ENCODE measurements at regions of chr3 and their contacts with region 1.

Region 1: GRCh38 chr3:115217678-115218451 is 70.8 kb upstream of the ZBTB20 start:
- H3K4me3 ChIP-seq: no peak overlapping the region
- H3K27ac ChIP-seq: no peak overlapping the region
- H3K4me1 ChIP-seq: no peaks in the 10 kb centered on the region
- CTCF ChIP-seq: no peak

Region 2: GRCh38 chr3:115692887-115693524 is 475.1 kb after region 1 on chr3:
- CTCF ChIA-PET with region 1: interaction called, 29 read pairs
- POLR2A ChIA-PET with region 1: no interaction called
- H3K4me3 ChIP-seq: no peak overlapping the region
- H3K27ac ChIP-seq: no peak overlapping the region
- H3K4me1 ChIP-seq: no peaks in the 10 kb centered on the region
- CTCF ChIP-seq: peak; percentile 63; the same call in 1 of the 2 replicates

Region 3: DNA sequence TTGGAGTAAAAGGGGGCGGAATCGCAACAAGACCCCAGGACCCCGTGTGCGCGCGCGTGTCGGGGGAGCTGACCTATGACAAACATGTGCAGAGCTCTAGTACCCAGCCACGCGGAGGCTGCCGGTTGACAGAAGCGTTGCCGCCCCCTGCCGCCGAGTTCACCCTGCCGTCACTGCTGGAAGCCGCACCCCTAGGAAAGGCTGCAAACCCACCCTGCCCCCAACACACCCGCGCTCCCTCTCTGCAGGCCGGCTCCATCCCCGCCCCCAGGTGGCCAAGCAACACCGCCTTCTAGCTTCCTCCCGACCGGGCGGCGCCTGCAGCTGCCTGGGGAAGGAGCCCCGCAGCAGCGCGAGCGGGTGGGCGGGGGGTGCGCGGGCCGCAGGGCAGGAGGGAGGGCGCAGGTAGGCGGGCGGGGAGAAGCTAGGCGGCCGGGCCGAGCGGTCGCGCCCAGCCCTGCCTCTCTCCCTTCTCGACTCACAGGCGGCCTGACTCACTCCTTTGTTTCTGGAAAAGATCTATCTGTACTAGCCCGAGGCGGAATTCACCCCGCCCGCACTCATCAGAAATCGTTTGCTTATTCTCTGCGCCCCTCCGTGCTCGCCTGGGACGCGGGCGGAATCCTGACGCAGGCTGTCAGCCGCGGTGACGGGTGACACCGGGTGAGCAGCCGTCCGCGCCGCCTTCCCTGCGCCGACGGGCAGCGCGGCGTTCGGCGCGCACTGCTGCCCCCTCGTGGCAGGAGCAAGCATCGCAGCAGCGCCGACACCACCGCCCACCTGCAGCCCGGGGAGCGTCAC is 566.3 kb after region 1 on chr3:
- CTCF ChIA-PET with region 1: interaction called, 15 read pairs
- POLR2A ChIA-PET with region 1: no interaction called
- H3K4me3 ChIP-seq: peak overlapping the region; percentile 52
- H3K27ac ChIP-seq: peak overlapping the region; percentile 86
- H3K4me1 ChIP-seq: no peaks in the 10 kb centered on the region
- CTCF ChIP-seq: peak; percentile 81

Region 4: GRCh38 chr3:115814778-115815380 is 597.0 kb after region 1 on chr3:
- CTCF ChIA-PET with region 1: interaction called, 13 read pairs
- POLR2A ChIA-PET with region 1: no interaction called
- H3K4me3 ChIP-seq: no peak overlapping the region
- H3K27ac ChIP-seq: no peak overlapping the region
- H3K4me1 ChIP-seq: no peaks in the 10 kb centered on the region
- CTCF ChIP-seq: no peak

Region 5: DNA sequence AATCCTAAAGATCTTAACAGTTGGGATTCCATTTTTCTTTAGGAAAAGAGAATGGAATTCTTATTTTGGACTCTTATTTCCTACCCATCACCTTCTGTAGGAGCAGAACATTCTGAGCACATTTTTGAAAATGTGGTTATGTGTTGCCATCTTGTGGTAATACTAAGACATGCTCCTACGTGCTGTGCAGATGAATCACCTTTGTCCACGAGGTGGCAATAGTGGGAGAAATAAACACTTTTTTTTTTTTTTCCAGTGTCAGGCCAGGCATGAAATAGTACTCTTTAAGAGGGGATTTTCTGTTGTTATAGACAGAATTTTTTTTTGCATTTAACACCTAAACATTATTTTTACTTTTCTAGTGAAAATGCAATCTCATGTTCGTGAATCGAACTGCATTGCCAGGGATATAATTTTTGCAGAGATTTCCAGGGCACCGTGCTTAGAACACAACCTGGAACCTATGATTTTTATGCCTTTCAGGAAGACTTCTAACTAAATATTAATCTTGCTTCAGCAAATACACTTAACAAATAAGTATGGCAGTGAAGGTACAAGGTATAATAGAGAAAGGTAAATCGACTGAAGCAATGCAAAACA is 602.0 kb after region 1 on chr3:
- CTCF ChIA-PET with region 1: interaction called, 13 read pairs
- POLR2A ChIA-PET with region 1: no interaction called
- H3K4me3 ChIP-seq: no peak overlapping the region
- H3K27ac ChIP-seq: no peak overlapping the region
- H3K4me1 ChIP-seq: no peaks in the 10 kb centered on the region
- CTCF ChIP-seq: peak; percentile 88